Common myeloid progenitor, CD34-positive (primary cell): ENCODE measurements at regions of chr5 and their contacts with region 1.

Region 1: GRCh38 chr5:93596676-93597461 is 13.8 kb downstream of the NR2F1 start:
- DNase-seq: peak in 1 of 3 donors; percentile 40
- H3K4me3 ChIP-seq: no peak overlapping the region
- H3K27ac ChIP-seq: no peak overlapping the region
- H3K4me1 ChIP-seq: peaks cover 0 to 3% (median 1%) of the 10 kb centered on the region in 4 experiments
- H3K27me3 ChIP-seq: peaks cover 46 to 100% (median 73%) of the 10 kb centered on the region in 5 experiments

Region 2: GRCh38 chr5:93580063-93580926 is 16.6 kb before region 1 on chr5:
- CTCF ChIA-PET with region 1: interaction called, 20 read pairs
- POLR2A ChIA-PET with region 1: no interaction called
- DNase-seq: peak in 2 of 3 donors; percentile 16 to 24
- H3K4me3 ChIP-seq: peak overlapping the region in 5 of 7 experiments; percentile 11 to 52 (median 45)
- H3K27ac ChIP-seq: no peak overlapping the region
- H3K4me1 ChIP-seq: peaks cover 0 to 40% (median 35%) of the 10 kb centered on the region in 4 experiments
- H3K27me3 ChIP-seq: peaks cover 36 to 92% (median 54%) of the 10 kb centered on the region in 5 experiments